ENCODE measurements at regions of chr1 and their contacts with region 1.

Region 1: GRCh38 chr1:181479137-181479745 is 4.1 kb upstream of the CACNA1E start:
- DNase-seq: no peak

Region 2: DNA sequence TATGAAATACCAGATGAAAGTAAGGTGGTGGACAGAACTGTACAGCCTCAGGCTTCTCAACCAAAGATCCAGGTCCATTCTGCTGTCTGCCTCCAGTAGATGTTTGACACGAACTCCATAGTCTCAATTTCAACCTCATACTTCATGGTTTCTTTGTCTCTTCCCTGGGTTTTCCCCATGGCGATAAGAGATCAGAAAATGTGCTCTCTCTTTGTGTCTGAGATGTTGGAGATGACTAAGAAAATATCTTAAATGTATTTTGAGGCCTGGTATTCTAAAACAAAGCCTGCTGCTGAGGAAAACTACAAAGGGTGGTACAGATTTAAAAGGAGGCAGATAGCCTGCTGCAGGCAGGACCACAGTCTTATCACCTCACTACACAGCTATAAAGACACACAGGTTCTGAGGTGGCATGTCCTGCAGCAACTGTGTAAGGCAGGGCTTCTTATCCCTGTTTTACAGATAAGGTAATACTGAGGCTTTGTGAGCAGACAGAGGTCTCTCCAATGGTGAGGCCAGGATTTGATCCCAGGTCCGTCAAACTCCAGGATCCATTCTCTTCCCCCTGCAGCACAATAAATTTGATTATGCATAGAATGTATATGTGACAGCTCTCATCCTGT is 35.9 kb before region 1 on chr1:
- intact Hi-C with region 1: no loop called
- DNase-seq: no peak

Region 3: GRCh38 chr1:181676269-181676668 is 197.0 kb after region 1 on chr1:
- intact Hi-C with region 1: loop called (anchors 2 kb)
- DNase-seq: no peak

Region 4: DNA sequence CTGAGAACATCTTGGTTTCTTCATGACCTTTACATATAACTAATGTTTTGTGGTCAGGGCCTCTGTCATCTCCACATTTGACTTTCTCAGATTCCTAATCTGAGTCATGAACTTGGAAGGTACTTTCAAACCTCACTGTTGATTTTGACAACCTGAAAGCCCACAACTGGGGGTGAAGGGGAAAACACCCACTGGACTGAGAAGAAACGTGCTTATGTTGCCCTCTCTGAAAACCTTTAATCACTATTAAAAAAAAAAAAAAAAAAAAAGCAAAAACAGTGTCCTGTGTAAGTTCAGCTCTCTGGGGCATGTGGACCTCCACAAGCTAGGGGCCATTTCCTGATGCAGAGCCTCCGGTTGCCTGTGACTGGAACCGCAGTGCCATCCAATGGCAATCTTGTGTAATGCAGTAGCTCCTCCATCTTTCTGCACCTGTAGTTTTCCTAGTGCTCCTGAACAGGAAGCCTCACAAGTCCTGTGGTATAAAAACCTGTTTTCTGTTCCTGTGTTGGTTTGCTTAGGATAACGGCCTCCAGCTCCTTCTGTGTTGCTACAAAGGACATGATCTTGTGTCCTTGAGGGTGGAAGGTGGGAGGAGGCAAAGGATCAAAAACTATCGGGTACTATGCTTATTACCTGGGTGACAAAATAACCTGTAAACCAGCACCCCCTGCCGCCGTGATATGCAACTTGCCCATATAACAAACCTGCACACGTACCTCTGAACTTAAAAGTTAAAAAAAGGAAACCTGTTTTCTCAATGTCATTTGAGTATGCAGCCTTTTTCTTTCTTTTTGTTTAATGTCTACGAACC is 457.7 kb after region 1 on chr1:
- intact Hi-C with region 1: loop called (anchors 5 kb)
- DNase-seq: no peak

Region 5: GRCh38 chr1:182054698-182055326 is 575.6 kb after region 1 on chr1:
- intact Hi-C with region 1: loop called (anchors 10 kb)
- DNase-seq: no peak

Region 6: DNA sequence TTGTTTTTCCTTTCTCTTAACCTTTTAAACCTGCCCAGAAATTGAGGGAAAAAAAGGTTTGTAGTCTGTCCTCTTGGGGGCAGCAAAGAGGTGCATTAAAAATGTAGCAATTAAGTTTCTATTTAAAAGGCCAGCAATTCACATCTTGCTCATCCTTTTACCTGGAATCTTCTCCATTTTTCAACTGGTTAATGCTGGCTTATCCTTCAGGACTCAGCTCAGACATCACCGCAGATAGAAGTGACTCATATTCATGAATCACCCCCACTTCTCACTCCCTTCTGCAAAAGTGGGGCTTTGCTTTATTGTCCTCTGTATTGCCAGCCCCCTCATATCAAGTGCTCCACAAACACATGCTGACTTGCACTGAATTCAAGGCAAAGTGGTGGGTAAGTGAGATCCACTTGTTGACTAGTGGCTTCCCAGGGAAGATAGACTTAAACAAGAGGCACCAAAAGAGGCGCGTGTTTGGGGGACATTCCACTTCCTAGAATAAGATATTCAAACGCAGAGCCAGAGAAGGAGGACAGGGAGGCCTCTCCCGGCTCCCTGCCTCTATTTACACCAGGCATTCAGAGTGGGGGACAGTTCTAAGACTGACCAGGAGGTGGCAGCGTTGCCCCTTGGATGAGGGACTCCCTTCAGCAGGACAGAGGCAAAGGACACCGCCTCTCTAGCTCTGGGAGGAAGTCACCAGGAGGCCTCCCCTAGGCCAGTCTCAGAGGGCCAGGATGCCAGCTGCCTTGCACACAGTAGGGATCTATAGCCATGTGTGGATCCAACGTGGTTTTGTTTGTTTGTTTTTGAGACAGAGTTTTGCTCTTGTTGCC is 605.5 kb after region 1 on chr1:
- intact Hi-C with region 1: loop called (anchors 2 kb)
- DNase-seq: peak; percentile 93